ENCODE measurements at regions of chr14 and their contacts with region 1.

Region 1: DNA sequence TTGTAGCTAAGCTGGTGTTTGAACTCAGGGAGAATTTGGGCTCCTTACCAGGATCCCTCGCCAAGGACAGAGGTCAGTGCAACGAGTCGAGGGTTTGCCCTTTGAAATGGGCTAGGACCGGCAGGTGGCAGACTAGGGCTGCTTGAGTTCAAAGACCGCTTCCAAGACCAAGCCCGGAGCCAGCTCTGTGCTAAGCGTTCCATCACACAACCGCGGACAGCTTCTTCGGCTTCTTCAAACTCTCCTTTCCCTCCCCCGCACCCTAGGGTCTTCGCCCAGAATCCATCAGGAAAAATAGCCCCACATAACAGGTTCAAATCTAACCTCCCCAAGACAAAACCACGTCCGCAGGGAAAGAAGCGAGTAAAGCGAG is 705 bp upstream of the FLVCR2 start:
- DNase-seq: peak; percentile 72 to 87 (median 84)
- H3K4me3 ChIP-seq: peak overlapping the region; percentile 56 to 95 (median 72)
- H3K4me3 Mint-ChIP-seq: no peak overlapping the region
- H3K27ac ChIP-seq: peak overlapping the region; percentile 55 to 76
- H3K27ac Mint-ChIP-seq: peak overlapping the region in 6 of 7 donors; percentile 90 to 97 (median 94)
- H3K4me1 ChIP-seq: peaks cover 41 to 46% of the 10 kb centered on the region in 2 donors
- H3K4me1 Mint-ChIP-seq: peaks cover 12% of the 10 kb centered on the region
- H3K27me3 ChIP-seq: no peaks in the 10 kb centered on the region
- H3K27me3 Mint-ChIP-seq: peaks cover 0 to 6% (median 1%) of the 10 kb centered on the region in 3 donors
- CTCF ChIP-seq: peak; percentile 80

Region 2: GRCh38 chr14:75372260-75372659 is 205.5 kb before region 1 on chr14:
- intact Hi-C with region 1: no loop called
- DNase-seq: no peak
- H3K4me3 ChIP-seq: no peak overlapping the region
- H3K4me3 Mint-ChIP-seq: no peak overlapping the region
- H3K27ac ChIP-seq: no peak overlapping the region
- H3K27ac Mint-ChIP-seq: peak overlapping the region in 1 of 7 donors; percentile 58
- H3K4me1 ChIP-seq: peaks cover 23 to 29% of the 10 kb centered on the region in 2 donors
- H3K4me1 Mint-ChIP-seq: peaks cover 28% of the 10 kb centered on the region
- H3K27me3 ChIP-seq: no peaks in the 10 kb centered on the region
- H3K27me3 Mint-ChIP-seq: peaks cover 0 to 7% (median 3%) of the 10 kb centered on the region in 3 donors
- CTCF ChIP-seq: no peak

Region 3: DNA sequence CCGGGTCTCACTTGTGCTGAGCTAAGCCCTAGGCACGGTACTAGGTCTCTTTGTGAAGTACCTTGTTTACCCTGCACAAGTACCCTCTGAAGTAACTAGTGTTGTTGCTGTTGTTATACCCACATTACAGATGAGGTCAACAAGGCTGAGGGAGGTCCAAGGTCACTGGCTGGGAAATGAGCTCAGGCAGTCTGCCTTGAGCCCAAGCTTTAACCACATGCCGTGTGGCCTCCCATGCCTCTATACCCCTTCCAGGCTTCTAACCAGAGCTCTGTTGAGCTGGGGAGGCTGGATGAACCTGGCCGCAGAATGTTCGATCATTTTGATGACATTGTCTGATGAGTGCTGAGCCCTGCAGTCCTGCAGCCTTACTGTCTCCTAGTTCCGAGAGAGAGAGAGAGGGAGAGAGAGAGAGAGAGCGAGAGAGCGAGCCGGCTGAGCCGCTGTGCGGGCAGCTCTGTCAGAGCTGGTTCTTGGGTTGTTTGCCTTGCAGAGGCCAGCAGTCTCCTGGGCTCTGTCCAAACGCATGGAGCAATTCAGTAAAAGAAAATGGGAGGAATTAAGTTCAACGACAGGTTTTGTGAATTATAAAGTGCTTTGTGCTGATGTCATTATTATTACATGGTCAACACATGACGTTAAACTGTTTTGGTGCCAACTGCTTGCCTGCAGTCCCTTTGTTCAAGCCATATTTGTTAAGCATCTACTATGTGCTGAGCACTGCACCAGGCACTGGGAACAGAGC is 136.8 kb before region 1 on chr14:
- intact Hi-C with region 1: no loop called
- DNase-seq: no peak
- H3K4me3 ChIP-seq: no peak overlapping the region
- H3K4me3 Mint-ChIP-seq: no peak overlapping the region
- H3K27ac ChIP-seq: no peak overlapping the region
- H3K27ac Mint-ChIP-seq: peak overlapping the region in 2 of 7 donors; percentile 3 to 50
- H3K4me1 ChIP-seq: peaks cover 8 to 26% of the 10 kb centered on the region in 2 donors
- H3K4me1 Mint-ChIP-seq: peaks cover 36% of the 10 kb centered on the region
- H3K27me3 ChIP-seq: no peaks in the 10 kb centered on the region
- H3K27me3 Mint-ChIP-seq: peaks cover 0 to 2% (median 0%) of the 10 kb centered on the region in 3 donors
- CTCF ChIP-seq: no peak

Region 4: DNA sequence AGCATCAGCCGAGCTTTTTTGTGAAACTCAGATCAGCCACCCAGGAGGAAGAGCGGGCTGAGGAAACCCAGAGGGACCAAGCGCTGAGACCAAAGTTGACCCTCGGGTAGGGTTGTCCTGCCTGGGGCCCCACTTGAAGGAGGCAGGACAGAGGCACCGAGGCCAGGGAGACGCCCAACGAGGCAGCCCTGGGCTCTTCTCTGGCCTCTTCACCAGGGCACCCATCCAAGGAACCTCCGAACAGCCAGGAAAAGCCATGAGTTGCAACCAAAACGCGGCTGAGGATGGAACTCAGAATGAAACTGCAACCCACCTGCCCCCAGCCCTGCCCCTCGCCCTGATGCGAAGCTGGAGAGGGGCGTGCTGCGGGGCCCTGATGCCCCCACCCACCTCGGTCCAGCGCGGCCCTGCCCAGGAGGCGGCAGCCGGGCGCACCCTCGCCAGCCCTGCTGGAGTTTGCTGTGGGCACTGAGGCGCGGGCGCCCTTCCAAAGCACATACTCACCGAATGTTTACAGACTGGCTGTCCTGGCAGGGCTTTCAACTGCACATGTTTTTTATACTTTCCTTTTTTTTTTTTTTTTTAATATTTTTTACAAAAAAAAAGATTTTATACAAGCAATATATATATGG is 108.0 kb before region 1 on chr14:
- intact Hi-C with region 1: no loop called
- DNase-seq: no peak
- H3K4me3 ChIP-seq: no peak overlapping the region
- H3K4me3 Mint-ChIP-seq: no peak overlapping the region
- H3K27ac ChIP-seq: no peak overlapping the region
- H3K27ac Mint-ChIP-seq: peak overlapping the region in 1 of 7 donors; percentile 77
- H3K4me1 ChIP-seq: no peaks in the 10 kb centered on the region
- H3K4me1 Mint-ChIP-seq: no peaks in the 10 kb centered on the region
- H3K27me3 ChIP-seq: no peaks in the 10 kb centered on the region
- H3K27me3 Mint-ChIP-seq: peaks cover 0 to 2% (median 0%) of the 10 kb centered on the region in 3 donors
- CTCF ChIP-seq: no peak

Region 5: DNA sequence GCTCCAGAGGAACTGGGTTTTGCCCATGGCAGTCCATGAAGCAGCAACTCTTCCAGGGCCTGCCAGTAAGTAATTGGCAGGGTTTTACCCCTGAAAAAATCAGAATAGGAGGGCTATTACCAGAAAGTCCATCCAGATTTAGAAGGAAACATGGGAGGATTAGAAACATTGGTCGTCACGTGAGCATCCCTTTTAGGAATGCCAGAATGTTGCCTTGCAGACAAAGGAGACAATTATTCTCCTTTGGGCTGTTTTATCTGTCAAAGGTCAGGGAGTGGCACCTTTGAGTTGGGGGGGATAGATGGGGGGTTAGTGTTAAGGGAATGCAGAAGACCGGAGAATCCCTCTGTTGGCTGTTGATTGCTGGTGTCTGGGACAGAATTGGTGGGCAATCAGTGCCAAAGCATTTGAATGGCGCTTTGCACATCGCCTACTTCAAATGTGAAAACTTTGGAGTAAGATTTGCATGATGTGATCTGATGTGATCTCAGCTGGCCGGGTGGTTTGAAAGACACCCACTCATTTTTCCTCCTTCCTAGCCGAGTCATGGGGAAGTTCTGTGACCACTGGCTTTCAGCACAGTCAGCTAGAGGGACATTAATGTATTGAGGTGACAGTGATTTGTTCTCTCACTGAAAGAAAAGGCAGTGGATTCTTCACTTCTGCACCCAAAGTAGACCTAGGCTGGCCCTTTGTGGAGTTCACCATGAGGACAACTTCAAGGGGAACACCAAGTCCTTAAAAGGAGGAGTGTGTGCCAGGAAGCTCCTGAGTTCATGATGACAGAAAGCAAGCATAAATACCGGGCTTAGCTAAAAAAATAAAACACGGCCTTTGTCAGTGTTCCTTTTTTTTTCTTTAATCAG is 32.1 kb after region 1 on chr14:
- intact Hi-C with region 1: loop called (anchors 2 to 5 kb)
- DNase-seq: peak; percentile 76 to 85 (median 76)
- H3K4me3 ChIP-seq: peak overlapping the region in 1 of 3 experiments; percentile 39
- H3K4me3 Mint-ChIP-seq: peak overlapping the region in 1 of 2 donors; percentile 71
- H3K27ac ChIP-seq: peak overlapping the region; percentile 79 to 94
- H3K27ac Mint-ChIP-seq: peak overlapping the region; percentile 92 to 98 (median 96)
- H3K4me1 ChIP-seq: peaks cover 74 to 76% of the 10 kb centered on the region in 2 donors
- H3K4me1 Mint-ChIP-seq: peaks cover 77% of the 10 kb centered on the region
- H3K27me3 ChIP-seq: no peaks in the 10 kb centered on the region
- H3K27me3 Mint-ChIP-seq: peaks cover 0 to 16% (median 0%) of the 10 kb centered on the region in 3 donors
- CTCF ChIP-seq: no peak

Region 6: DNA sequence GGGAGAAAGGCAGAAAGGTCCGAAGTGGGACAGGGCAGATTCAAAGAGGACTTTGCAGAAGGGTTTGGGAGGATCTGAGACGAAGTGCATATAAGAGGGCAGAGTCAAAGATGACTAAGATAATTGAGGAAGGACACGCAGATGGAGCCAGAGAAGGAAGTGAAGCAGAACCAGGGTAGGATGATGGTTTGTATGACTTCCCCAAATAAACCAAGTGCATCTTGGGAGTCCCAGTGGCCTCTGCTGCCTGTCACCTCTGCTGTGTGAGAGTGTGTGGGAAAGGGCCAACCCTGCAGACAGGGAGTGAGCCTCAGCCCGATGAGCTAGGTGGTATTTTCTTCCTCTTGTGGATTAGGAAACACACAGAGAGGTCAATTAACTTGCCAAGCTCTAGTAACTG is 37.5 kb after region 1 on chr14:
- intact Hi-C with region 1: loop called (anchors 2 to 5 kb)
- DNase-seq: peak; percentile 94 to 98 (median 98)
- H3K4me3 ChIP-seq: peak overlapping the region in 1 of 3 experiments; percentile 38
- H3K4me3 Mint-ChIP-seq: peak overlapping the region in 1 of 2 donors; percentile 84
- H3K27ac ChIP-seq: peak overlapping the region; percentile 96 to 100
- H3K27ac Mint-ChIP-seq: peak overlapping the region; percentile 98 to 99 (median 99)
- H3K4me1 ChIP-seq: peaks cover 62 to 65% of the 10 kb centered on the region in 2 donors
- H3K4me1 Mint-ChIP-seq: peaks cover 59% of the 10 kb centered on the region
- H3K27me3 ChIP-seq: no peaks in the 10 kb centered on the region
- H3K27me3 Mint-ChIP-seq: peaks cover 0 to 13% (median 1%) of the 10 kb centered on the region in 3 donors
- CTCF ChIP-seq: no peak

Region 7: GRCh38 chr14:75654127-75654732 is 76.5 kb after region 1 on chr14:
- intact Hi-C with region 1: loop called (anchors 1 kb)
- DNase-seq: peak; percentile 60 to 80 (median 74)
- H3K4me3 ChIP-seq: no peak overlapping the region
- H3K4me3 Mint-ChIP-seq: no peak overlapping the region
- H3K27ac ChIP-seq: no peak overlapping the region
- H3K27ac Mint-ChIP-seq: no peak overlapping the region
- H3K4me1 ChIP-seq: no peaks in the 10 kb centered on the region
- H3K4me1 Mint-ChIP-seq: peaks cover 6% of the 10 kb centered on the region
- H3K27me3 ChIP-seq: no peaks in the 10 kb centered on the region
- H3K27me3 Mint-ChIP-seq: no peaks in the 10 kb centered on the region
- CTCF ChIP-seq: peak; percentile 91

Region 8: GRCh38 chr14:75982266-75983018 is 404.7 kb after region 1 on chr14:
- intact Hi-C with region 1: loop called in 1 of 2 experiments (anchors 10 kb)
- DNase-seq: peak; percentile 59 to 70 (median 68)
- H3K4me3 ChIP-seq: peak overlapping the region; percentile 48 to 83 (median 76)
- H3K4me3 Mint-ChIP-seq: peak overlapping the region; percentile 92 to 98
- H3K27ac ChIP-seq: peak overlapping the region in 1 of 2 donors; percentile 72
- H3K27ac Mint-ChIP-seq: peak overlapping the region in 6 of 7 donors; percentile 55 to 89 (median 78)
- H3K4me1 ChIP-seq: peaks cover 27 to 32% of the 10 kb centered on the region in 2 donors
- H3K4me1 Mint-ChIP-seq: peaks cover 43% of the 10 kb centered on the region
- H3K27me3 ChIP-seq: peaks cover 0 to 11% of the 10 kb centered on the region in 2 donors
- H3K27me3 Mint-ChIP-seq: peaks cover 17 to 41% (median 24%) of the 10 kb centered on the region in 3 donors
- CTCF ChIP-seq: peak; percentile 72

Measured in CD14-positive monocyte (primary cell).